Esophagus muscularis mucosa (tissue), 4 donors: ENCODE measurements at regions of chr2 and their contacts with region 1.

Region 1: GRCh38 chr2:106020821-106021661 is 173.1 kb downstream of the UXS1 start:
- DNase-seq: peak; percentile 92
- H3K4me3 ChIP-seq: no peak overlapping the region
- H3K27ac ChIP-seq: peak overlapping the region; percentile 31 to 72 (median 62)
- H3K4me1 ChIP-seq: peaks cover 20 to 37% (median 35%) of the 10 kb centered on the region in 4 donors
- H3K27me3 ChIP-seq: no peaks in the 10 kb centered on the region
- CTCF ChIP-seq: no peak
- EP300 ChIP-seq: no peak
- POLR2A ChIP-seq: no peak

Region 2: GRCh38 chr2:105398699-105399432 is 622.2 kb before region 1 on chr2 and contains the start of gene FHL2:
- intact Hi-C with region 1: loop called (anchors 10 kb)
- DNase-seq: no peak
- H3K4me3 ChIP-seq: peak within 1 kb of the TSS; percentile 74 to 92 (median 80)
- H3K27ac ChIP-seq: peak within 1 kb of the TSS; percentile 81 to 95 (median 92)
- H3K4me1 ChIP-seq: peaks cover 28 to 56% (median 47%) of the 10 kb centered on the region in 4 donors
- H3K27me3 ChIP-seq: peaks cover 0 to 14% (median 0%) of the 10 kb centered on the region in 4 donors
- CTCF ChIP-seq: peak; percentile 35 to 64 (median 49)
- EP300 ChIP-seq: no peak
- POLR2A ChIP-seq: peak; percentile 67
- total RNA-seq, gene FHL2: 81.8 to 114 (median 87.9) TPM